HEK293 (cell line): ENCODE measurements at regions of chr19 and their contacts with region 1.

Region 1: DNA sequence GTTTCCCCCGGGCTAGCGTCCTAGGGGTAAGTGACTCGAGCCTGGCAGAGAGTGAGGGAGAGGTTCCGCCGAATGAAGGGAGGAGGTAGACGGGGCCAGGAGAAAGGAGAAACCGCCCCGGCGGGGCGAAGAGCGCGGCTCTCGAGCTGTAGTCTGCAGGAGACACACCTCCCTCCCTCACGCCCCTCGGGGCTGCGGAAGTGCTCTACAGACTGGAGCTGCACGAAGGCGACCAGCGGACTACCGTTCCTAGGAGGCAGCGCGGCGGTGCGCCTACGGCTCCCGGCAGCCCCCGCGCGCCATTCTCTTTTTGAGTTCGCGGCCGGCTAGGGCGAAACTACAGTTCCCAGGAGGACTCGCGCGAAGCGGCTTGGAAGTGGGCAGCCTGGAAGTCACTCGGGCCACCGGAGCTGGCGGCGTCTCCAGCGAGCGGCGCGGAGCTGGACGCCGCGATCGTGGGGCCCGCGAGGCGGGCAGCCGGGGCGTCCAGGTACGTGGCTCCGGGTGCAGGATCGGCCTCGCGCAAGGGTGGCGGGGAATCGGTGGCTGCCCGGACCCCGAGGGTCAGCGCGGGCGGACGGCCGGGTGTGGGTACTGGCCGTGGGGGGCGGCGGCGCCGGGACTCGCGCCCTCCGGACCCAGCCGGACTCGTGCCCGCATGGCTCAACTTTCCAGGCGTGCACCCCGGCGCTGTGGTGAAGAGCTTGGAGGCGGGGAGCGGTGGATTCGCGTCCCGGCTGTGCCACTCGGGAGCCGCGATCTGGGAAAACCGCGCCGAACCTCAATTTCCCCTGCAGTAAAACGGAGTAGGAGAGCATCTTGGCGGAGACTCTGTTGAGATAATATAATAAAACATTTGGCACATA is at the start of gene SIPA1L3:
- H3K4me3 ChIP-seq: peak within 1 kb of the TSS; percentile 68
- H3K27ac ChIP-seq: peak within 1 kb of the TSS; percentile 81
- H3K4me1 ChIP-seq: peaks cover 27% of the 10 kb centered on the region
- CTCF ChIP-seq: peak; percentile 79; the same call in 1 of the 2 replicates

Region 2: GRCh38 chr19:37519890-37520289 is 387.2 kb before region 1 on chr19:
- CTCF ChIA-PET with region 1: no interaction called
- POLR2A ChIA-PET with region 1: no interaction called
- H3K4me3 ChIP-seq: no peak overlapping the region
- H3K27ac ChIP-seq: no peak overlapping the region
- H3K4me1 ChIP-seq: no peaks in the 10 kb centered on the region
- CTCF ChIP-seq: no peak

Region 3: GRCh38 chr19:37920591-37921450 is 13.7 kb after region 1 on chr19:
- CTCF ChIA-PET with region 1: interaction called, 23 read pairs
- POLR2A ChIA-PET with region 1: interaction called, 16 read pairs
- H3K4me3 ChIP-seq: no peak overlapping the region
- H3K27ac ChIP-seq: no peak overlapping the region
- H3K4me1 ChIP-seq: no peaks in the 10 kb centered on the region
- CTCF ChIP-seq: no peak

Region 4: DNA sequence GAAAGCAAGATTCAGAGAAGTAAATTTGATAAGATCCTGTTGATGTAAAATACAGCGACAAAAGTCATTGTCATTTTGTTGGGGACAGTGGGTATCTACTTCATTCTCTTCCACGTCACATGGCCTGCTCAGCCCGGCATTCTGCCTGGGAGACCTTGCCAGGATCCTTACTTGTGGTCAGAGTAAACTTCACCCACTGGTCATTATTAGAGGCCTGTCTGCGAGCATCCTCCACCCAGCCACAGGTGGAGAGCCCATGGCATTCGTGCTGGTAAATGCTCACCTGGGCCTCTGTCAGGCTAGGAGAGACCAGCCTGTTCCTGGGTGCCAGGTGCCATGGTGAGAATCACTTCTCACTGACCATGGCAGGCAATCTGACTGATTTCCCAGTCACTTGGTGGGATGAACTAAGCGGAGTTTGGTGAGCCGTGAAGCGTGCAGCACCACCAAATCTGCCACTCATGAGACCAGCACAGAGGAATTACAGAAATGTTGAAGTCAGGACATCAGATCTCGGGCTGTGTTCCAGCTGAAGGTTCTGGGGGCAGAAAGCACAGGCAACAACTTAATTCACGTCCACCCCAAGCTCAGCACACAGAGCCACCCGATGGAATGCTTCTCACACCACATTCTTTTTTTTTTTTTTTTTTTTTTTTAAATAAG is 106.9 kb after region 1 on chr19:
- CTCF ChIA-PET with region 1: interaction called, 10 read pairs
- POLR2A ChIA-PET with region 1: interaction called, 6 read pairs
- H3K4me3 ChIP-seq: no peak overlapping the region
- H3K27ac ChIP-seq: no peak overlapping the region
- H3K4me1 ChIP-seq: no peaks in the 10 kb centered on the region
- CTCF ChIP-seq: no peak

Region 5: DNA sequence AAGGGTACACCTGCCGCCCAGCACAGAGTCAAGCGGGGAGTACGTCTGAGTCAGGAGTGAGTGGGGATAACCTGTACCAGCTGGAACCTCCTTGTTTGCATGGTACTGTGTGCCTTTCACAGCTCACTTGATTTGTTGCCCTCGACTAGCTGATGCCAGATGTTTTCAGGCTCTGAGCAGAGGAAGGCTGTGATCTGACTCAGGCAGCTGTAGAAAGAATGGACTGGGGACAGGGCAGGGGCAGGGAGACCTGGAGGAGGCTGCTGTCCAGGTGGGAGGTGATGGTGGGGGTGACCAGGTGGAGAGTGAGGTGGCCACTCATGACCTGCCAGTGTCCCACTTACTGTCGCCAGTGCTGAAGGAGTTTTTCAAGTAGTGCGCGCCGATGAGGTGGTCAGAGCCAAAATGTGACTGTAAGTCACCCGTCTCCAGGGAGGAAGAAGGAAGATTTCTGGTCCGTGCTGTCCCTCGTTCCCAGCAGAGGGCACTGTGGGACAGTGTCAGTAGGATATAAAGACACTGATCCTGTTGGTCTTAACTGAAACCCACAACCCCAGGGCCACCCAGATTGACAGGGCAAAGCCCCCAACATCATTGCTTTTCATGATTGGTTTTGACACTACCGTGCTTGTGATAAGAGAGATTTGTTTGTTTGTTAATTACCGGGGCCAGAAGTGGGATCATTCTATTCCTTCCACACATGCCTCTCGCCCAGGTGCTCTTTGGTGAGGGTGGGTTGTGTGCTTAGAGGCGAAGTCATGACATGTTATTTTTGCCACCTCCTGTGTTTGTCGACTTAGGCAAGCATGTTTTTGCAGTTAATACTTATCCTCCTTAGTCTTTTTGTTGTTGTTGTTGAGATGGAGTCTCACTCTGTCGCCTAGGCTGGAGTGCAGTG is 188.6 kb after region 1 on chr19:
- CTCF ChIA-PET with region 1: interaction called, 41 read pairs
- POLR2A ChIA-PET with region 1: interaction called, 4 read pairs
- H3K4me3 ChIP-seq: no peak overlapping the region
- H3K27ac ChIP-seq: no peak overlapping the region; the same call in 1 of the 2 replicates
- H3K4me1 ChIP-seq: no peaks in the 10 kb centered on the region; the same call in 1 of the 2 replicates
- CTCF ChIP-seq: peak; percentile 93

Region 6: GRCh38 chr19:38173291-38174041 is 266.4 kb after region 1 on chr19:
- CTCF ChIA-PET with region 1: interaction called, 10 read pairs
- POLR2A ChIA-PET with region 1: no interaction called
- H3K4me3 ChIP-seq: no peak overlapping the region
- H3K27ac ChIP-seq: no peak overlapping the region
- H3K4me1 ChIP-seq: no peaks in the 10 kb centered on the region
- CTCF ChIP-seq: no peak

Region 7: GRCh38 chr19:38374429-38375176 is 467.5 kb after region 1 on chr19 and contains the start of gene PSMD8:
- CTCF ChIA-PET with region 1: interaction called, 8 read pairs
- POLR2A ChIA-PET with region 1: interaction called, 34 read pairs
- H3K4me3 ChIP-seq: peak within 1 kb of the TSS; percentile 70
- H3K27ac ChIP-seq: peak within 1 kb of the TSS; percentile 93
- H3K4me1 ChIP-seq: peaks cover 20% of the 10 kb centered on the region
- CTCF ChIP-seq: peak; percentile 97